ENCODE measurements at regions of chr6 and their contacts with region 1.

Region 1: GRCh38 chr6:139369568-139370282 is 4.7 kb downstream of the CITED2 start:
- DNase-seq: no peak
- ATAC-seq: no peak
- H3K4me3 Mint-ChIP-seq: no peak overlapping the region
- H3K27ac Mint-ChIP-seq: peak overlapping the region; percentile 4
- H3K4me1 Mint-ChIP-seq: peaks cover 27% of the 10 kb centered on the region
- H3K27me3 Mint-ChIP-seq: no peaks in the 10 kb centered on the region
- CTCF ChIP-seq: no peak

Region 2: GRCh38 chr6:139349464-139350020 is 20.2 kb before region 1 on chr6:
- CTCF ChIA-PET with region 1: no interaction called
- POLR2A ChIA-PET with region 1: no interaction called
- intact Hi-C with region 1: no loop called
- DNase-seq: no peak
- ATAC-seq: no peak
- H3K4me3 Mint-ChIP-seq: no peak overlapping the region
- H3K27ac Mint-ChIP-seq: no peak overlapping the region
- H3K4me1 Mint-ChIP-seq: no peaks in the 10 kb centered on the region
- H3K27me3 Mint-ChIP-seq: no peaks in the 10 kb centered on the region
- CTCF ChIP-seq: no peak

Region 3: GRCh38 chr6:139927236-139927635 is 557.5 kb after region 1 on chr6:
- CTCF ChIA-PET with region 1: interaction called, 3 read pairs
- POLR2A ChIA-PET with region 1: no interaction called
- intact Hi-C with region 1: loop called (anchors 1 kb)
- DNase-seq: no peak
- ATAC-seq: no peak
- H3K4me3 Mint-ChIP-seq: no peak overlapping the region
- H3K27ac Mint-ChIP-seq: no peak overlapping the region
- H3K4me1 Mint-ChIP-seq: no peaks in the 10 kb centered on the region
- H3K27me3 Mint-ChIP-seq: no peaks in the 10 kb centered on the region
- CTCF ChIP-seq: no peak

Measured in activated B cell treated with CpG ODN at 0.5 μM for 24 hours (primary cell).